ENCODE measurements at regions of chr3 and their contacts with region 1.

Region 1: GRCh38 chr3:167684388-167684993 is 30.7 kb upstream of the WDR49 start:
- DNase-seq: peak; percentile 61
- ATAC-seq: peak; percentile 74
- H3K4me3 Mint-ChIP-seq: no peak overlapping the region
- H3K27ac Mint-ChIP-seq: no peak overlapping the region
- H3K4me1 Mint-ChIP-seq: peaks cover 5% of the 10 kb centered on the region
- H3K27me3 Mint-ChIP-seq: no peaks in the 10 kb centered on the region
- CTCF ChIP-seq: peak; percentile 83

Region 2: GRCh38 chr3:167669699-167670098 is 14.8 kb before region 1 on chr3:
- CTCF ChIA-PET with region 1: interaction called, 25 read pairs
- POLR2A ChIA-PET with region 1: no interaction called
- intact Hi-C with region 1: no loop called
- DNase-seq: no peak
- ATAC-seq: no peak
- H3K4me3 Mint-ChIP-seq: no peak overlapping the region
- H3K27ac Mint-ChIP-seq: no peak overlapping the region
- H3K4me1 Mint-ChIP-seq: no peaks in the 10 kb centered on the region
- H3K27me3 Mint-ChIP-seq: no peaks in the 10 kb centered on the region
- CTCF ChIP-seq: no peak

Region 3: DNA sequence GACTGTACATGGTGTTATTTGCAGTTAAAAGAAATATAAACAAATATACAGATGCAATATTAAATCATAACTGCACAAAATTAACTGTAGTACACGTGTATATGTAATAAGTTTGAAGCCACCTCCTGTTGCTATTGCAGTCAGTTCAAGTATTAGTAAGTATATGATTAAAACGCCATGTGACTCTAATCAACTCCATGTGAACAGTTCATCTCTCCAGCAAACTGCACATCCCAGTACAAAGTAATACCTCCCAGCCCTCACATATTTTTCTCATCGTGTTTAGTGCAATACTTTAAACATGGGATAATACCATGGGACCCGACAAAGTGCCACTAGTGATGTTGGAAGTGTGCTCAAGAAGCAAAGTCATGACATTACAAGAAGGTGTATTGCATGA is 15.6 kb after region 1 on chr3:
- CTCF ChIA-PET with region 1: interaction called, 22 read pairs
- POLR2A ChIA-PET with region 1: no interaction called
- intact Hi-C with region 1: no loop called
- DNase-seq: no peak
- ATAC-seq: no peak
- H3K4me3 Mint-ChIP-seq: no peak overlapping the region
- H3K27ac Mint-ChIP-seq: no peak overlapping the region
- H3K4me1 Mint-ChIP-seq: peaks cover 8% of the 10 kb centered on the region
- H3K27me3 Mint-ChIP-seq: no peaks in the 10 kb centered on the region
- CTCF ChIP-seq: no peak